T-cell (primary cell): ENCODE measurements at regions of chr2 and their contacts with region 1.

Region 1: GRCh38 chr2:190947711-190948251 is 66.2 kb downstream of the STAT1 start:
- DNase-seq: peak in 24 of 35 experiments; percentile 5 to 63 (median 24)
- ATAC-seq: peak; percentile 73 to 90 (median 78)
- H3K4me3 ChIP-seq: no peak overlapping the region
- H3K4me3 Mint-ChIP-seq: peak overlapping the region; percentile 6 to 57 (median 43)
- H3K27ac ChIP-seq: peak overlapping the region; percentile 65
- H3K27ac Mint-ChIP-seq: no peak overlapping the region
- H3K4me1 ChIP-seq: peaks cover 6 to 14% of the 10 kb centered on the region in 2 experiments
- H3K4me1 Mint-ChIP-seq: peaks cover 7 to 17% (median 11%) of the 10 kb centered on the region in 3 donors
- H3K27me3 ChIP-seq: no peaks in the 10 kb centered on the region
- H3K27me3 Mint-ChIP-seq: no peaks in the 10 kb centered on the region

Region 2: DNA sequence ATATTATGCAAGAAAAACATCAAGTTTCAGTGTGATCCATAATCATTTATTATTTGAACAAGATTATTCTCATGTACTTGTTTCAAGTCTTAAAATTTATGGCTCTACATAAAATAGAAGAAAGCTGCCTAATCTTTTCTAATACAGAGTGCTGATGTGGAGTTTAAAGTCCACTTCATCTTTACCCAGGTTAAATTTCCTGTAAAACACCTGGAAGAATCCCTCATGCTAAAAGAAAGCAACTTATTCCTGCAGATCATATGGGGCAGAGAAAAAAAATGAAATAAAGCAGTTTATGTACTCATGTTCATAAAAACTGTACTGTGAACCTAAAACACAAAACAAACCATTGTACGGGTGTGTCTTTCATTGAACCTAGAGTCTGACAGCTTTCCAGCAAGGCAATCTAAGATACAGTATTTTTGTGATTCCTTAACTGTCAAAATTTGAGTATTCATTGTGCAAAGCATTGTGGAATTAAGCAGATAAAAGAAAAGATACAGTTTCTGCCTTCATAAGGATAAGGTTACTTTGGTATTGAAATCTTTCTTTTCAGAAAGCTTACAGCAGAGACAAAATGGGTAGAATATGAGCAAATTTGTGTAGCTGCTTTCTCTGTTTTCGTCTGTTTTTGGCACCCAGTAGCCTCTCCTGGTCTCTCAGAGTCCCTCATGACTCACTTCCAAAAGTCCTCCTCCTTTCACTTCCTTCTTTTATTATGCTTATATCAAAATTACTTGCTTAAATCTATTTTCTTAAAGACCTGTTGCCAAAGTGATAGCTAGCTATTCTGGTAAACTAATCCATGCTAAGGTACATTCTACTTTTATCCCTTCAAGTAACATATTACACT is 94.0 kb before region 1 on chr2:
- CTCF ChIA-PET with region 1: interaction called, 8 to 19 read pairs
- POLR2A ChIA-PET with region 1: interaction called in 1 of 2 experiments, 3 read pairs
- DNase-seq: no peak
- ATAC-seq: no peak
- H3K4me3 ChIP-seq: no peak overlapping the region
- H3K4me3 Mint-ChIP-seq: no peak overlapping the region
- H3K27ac ChIP-seq: no peak overlapping the region
- H3K27ac Mint-ChIP-seq: no peak overlapping the region
- H3K4me1 ChIP-seq: no peaks in the 10 kb centered on the region
- H3K4me1 Mint-ChIP-seq: peaks cover 0 to 2% (median 2%) of the 10 kb centered on the region in 3 donors
- H3K27me3 ChIP-seq: no peaks in the 10 kb centered on the region
- H3K27me3 Mint-ChIP-seq: no peaks in the 10 kb centered on the region

Region 3: DNA sequence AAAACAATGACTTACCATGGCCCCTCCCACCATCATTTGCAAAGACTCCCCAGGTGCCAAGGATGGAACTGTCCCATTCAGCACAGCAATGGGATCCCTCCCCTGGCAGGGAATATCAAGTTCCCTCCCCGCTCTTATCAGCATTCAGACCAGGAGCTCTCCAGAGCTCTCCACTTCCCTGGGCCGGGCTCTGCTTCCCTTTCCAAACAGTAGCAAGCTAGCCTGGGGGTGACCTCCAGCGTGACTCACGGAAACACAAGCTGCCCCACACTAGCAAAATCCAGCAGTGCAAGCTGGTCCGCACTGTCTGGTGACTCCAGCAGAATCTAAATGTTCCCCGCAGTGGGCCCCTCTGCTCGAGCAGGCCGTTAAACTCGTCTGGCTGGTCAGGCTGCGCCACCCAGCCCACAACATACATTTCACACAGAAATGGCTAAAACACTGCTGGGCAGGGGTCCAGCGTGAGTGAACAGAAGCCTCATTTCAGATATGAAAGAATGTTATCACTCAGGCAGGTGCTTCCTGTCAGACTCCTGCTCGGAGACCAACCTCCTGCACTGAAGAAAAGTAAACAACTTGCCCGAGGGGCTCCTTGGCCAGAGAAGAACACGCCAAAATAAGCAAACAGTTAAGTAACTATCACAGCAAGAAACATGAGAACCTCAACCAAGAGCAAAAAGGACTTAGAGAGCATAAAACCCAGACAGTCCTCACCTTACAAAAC is 32.3 kb after region 1 on chr2:
- CTCF ChIA-PET with region 1: no interaction called
- POLR2A ChIA-PET with region 1: no interaction called
- DNase-seq: no peak
- ATAC-seq: peak in 3 of 4 experiments; percentile 22 to 36 (median 34)
- H3K4me3 ChIP-seq: no peak overlapping the region
- H3K4me3 Mint-ChIP-seq: peak overlapping the region in 1 of 3 donors; percentile 30
- H3K27ac ChIP-seq: peak overlapping the region; percentile 8
- H3K27ac Mint-ChIP-seq: peak overlapping the region; percentile 79 to 94
- H3K4me1 ChIP-seq: peaks cover 3 to 13% of the 10 kb centered on the region in 2 experiments
- H3K4me1 Mint-ChIP-seq: peaks cover 53 to 75% (median 61%) of the 10 kb centered on the region in 3 donors
- H3K27me3 ChIP-seq: no peaks in the 10 kb centered on the region
- H3K27me3 Mint-ChIP-seq: no peaks in the 10 kb centered on the region